Esophagus muscularis mucosa (tissue), 4 donors: ENCODE measurements at regions of chr2 and their contacts with region 1.

Region 1: GRCh38 chr2:134118279-134119116 is 135.4 kb upstream of the MGAT5 start:
- DNase-seq: peak; percentile 97
- H3K4me3 ChIP-seq: no peak overlapping the region
- H3K27ac ChIP-seq: peak overlapping the region; percentile 88 to 95 (median 93)
- H3K4me1 ChIP-seq: peaks cover 32 to 44% (median 37%) of the 10 kb centered on the region in 4 donors
- H3K27me3 ChIP-seq: no peaks in the 10 kb centered on the region
- CTCF ChIP-seq: peak; percentile 84 to 90 (median 87)
- EP300 ChIP-seq: no peak
- POLR2A ChIP-seq: no peak

Region 2: DNA sequence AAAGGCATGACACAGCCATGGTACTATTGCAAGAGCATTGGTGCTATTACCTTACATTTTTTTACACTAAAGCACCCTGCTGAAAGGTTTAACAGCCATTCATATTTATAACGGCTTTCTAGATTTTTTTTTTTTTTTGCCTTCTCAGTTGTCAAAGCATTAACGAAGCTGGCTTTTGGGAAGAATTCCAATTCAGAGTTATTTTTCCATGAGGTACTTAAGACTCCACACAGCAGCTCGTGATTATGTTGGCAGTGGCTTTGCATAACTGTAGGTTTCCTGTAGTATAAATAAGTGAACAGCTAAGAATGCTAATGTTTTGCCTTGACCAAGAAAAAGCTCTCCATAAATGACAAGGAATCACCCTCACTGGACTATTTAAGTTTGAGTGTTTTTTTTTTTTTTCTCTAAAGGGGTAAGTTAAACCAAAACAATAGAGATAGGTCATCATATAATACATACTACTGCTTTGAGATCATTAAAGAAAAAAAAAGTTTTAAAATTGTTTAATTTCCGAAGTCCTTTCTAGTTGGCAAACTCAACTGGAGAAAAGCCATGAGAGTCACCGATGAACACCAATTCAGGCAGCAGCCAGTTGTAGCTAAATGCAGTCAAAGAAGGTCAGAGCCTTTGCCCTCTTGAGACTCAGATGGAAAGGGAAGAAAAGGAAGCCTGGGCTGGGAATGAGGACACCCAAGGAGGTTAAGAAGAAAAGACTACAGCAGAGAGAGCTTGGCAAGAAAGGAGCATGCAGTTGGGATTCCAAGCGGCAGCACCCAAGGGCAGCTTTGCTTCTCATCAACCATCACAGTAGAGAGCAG is 362.8 kb before region 1 on chr2:
- intact Hi-C with region 1: no loop called
- DNase-seq: no peak
- H3K4me3 ChIP-seq: no peak overlapping the region
- H3K27ac ChIP-seq: peak overlapping the region; percentile 77 to 81 (median 80)
- H3K4me1 ChIP-seq: peaks cover 7 to 31% (median 22%) of the 10 kb centered on the region in 4 donors
- H3K27me3 ChIP-seq: no peaks in the 10 kb centered on the region
- CTCF ChIP-seq: no peak
- EP300 ChIP-seq: peak; percentile 33
- POLR2A ChIP-seq: no peak

Region 3: DNA sequence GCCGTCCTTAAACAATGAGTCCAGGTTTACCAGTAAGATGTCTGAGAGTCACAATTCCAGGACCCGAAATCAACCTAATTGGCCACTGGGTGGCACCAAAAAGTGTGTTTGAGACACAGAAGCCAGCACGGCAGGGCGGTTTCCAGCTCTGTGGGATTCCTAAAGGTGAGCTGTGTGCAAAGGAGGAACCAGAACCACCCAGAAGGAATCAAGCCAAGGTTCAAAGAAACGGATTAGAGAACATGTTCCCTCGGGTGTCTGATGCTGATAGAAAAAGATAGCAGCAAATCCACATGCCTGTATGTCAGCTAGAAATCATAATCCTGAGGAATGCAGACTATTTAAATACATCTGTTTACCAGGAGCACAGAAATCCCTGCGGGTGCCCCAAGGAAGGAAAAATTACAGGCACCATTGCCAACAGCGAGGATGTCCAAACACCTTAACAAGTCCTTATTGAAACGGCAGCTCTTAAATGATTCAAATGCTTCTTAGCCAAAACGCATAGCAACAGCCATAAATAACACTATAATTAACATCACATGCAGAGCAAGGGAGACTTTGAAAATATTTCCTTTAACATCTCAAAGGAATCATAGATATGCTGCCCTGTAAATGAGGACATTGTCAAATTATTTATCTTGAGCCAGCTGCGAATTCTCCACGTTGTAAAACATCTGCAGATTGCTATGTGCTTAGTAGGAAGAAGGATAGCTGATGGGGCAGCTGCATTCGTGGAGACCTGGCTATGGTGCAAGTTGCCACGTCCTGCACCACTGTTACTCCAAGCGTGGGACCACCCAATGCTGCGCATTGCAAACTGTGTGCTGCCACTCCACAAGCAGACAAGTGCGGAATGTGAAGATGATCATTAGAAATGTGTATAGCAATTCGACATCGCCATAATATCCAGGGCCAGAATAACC is 231.5 kb before region 1 on chr2:
- intact Hi-C with region 1: loop called (anchors 2 kb)
- DNase-seq: peak; percentile 91
- H3K4me3 ChIP-seq: no peak overlapping the region
- H3K27ac ChIP-seq: peak overlapping the region in 1 of 4 donors; percentile 52
- H3K4me1 ChIP-seq: peaks cover 0 to 17% (median 15%) of the 10 kb centered on the region in 4 donors
- H3K27me3 ChIP-seq: no peaks in the 10 kb centered on the region
- CTCF ChIP-seq: peak; percentile 55 to 66 (median 57)
- EP300 ChIP-seq: no peak
- POLR2A ChIP-seq: no peak

Region 4: DNA sequence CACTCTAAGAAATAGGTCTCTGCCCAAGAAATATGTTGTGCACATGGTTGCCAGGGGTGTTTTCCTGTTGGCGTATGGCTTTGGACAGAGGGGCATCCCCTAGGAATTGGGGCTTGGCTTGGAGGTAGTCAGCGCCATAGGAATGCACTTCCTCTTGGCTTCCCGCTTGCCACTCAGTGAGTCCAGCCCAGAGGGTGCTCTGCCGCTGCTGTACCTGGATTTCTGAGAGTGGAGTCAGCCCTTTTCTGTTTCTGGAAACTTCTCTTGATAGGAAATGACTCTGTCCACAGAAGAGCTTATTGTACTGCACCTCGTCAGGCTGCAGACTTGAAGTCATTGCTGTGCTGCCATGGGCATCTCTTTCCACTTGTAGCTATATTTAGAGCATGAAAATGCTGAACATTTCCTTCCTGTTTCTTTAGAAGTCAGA is 18.7 kb after region 1 on chr2:
- intact Hi-C with region 1: no loop called
- DNase-seq: no peak
- H3K4me3 ChIP-seq: peak overlapping the region; percentile 9 to 24 (median 17)
- H3K27ac ChIP-seq: peak overlapping the region; percentile 52 to 72 (median 62)
- H3K4me1 ChIP-seq: peaks cover 25 to 80% (median 57%) of the 10 kb centered on the region in 4 donors
- H3K27me3 ChIP-seq: no peaks in the 10 kb centered on the region
- CTCF ChIP-seq: no peak
- EP300 ChIP-seq: peak; percentile 68
- POLR2A ChIP-seq: no peak

Region 5: DNA sequence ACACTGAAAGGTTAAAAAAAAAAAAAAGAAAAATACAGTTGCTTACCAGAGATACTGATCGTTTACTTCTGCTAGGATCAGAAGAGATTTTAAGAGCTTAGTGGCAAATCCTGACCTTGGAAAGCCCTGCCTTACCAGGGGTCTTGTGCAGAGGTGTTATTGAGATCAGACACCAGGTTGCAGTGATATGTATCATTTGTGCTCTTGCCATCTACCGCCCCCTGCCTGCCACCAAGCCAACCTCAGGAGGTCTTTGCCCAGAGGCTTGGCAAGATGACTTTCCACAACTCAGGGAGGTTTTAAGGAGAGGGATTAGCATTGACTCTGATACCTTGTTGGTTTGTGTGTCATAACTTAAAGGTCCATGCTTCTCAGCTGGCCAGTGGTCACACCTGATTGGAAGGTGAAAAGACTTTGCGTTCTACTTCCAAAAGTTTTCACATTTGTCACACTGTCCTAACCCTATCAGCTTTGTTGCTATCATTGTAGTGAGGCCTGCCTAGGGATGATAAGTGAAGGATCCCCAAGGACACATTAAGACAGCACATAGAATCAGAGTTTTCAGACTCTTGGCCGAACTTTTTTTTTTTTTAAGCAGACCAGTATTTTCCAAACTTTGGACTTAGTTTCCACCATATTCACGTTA is 89.2 kb after region 1 on chr2:
- intact Hi-C with region 1: loop called (anchors 5 kb)
- DNase-seq: no peak
- H3K4me3 ChIP-seq: no peak overlapping the region
- H3K27ac ChIP-seq: no peak overlapping the region
- H3K4me1 ChIP-seq: peaks cover 31 to 45% (median 36%) of the 10 kb centered on the region in 4 donors
- H3K27me3 ChIP-seq: no peaks in the 10 kb centered on the region
- CTCF ChIP-seq: peak; percentile 48 to 54 (median 53)
- EP300 ChIP-seq: no peak
- POLR2A ChIP-seq: no peak

Region 6: DNA sequence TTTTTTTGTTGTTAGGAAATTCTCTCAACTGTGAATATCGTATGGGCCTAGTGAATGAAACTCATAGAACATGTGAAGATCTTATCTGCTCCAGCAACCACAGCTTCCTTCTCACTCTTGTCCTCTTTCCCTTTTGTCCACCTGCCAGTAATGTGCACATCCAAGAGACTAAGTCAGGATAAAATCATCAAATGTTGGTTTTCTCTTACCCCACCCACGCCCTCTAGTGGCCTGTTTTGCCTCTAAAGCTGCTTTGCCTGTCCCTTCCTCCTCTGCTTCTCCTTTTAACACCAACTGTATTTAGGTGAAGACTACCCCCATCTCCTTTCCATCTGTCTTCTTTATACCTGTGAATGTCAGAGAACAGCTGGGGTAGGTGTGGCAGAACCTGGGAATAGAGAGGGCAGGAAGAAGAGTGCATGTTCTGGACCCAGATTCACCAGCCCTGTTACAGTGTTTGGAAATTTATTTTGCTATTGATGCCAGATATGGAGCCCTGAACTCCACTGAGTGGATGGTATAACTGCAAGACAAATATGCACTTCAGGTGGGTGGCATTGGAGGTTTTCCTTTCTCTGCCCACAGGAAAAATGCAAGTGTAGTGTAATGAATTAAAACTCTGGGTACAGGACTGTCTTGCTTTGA is 127.0 kb after region 1 on chr2:
- intact Hi-C with region 1: loop called (anchors 2 kb)
- DNase-seq: peak; percentile 93
- H3K4me3 ChIP-seq: no peak overlapping the region
- H3K27ac ChIP-seq: no peak overlapping the region
- H3K4me1 ChIP-seq: peaks cover 19 to 37% (median 21%) of the 10 kb centered on the region in 4 donors
- H3K27me3 ChIP-seq: no peaks in the 10 kb centered on the region
- CTCF ChIP-seq: peak; percentile 63 to 77 (median 66)
- EP300 ChIP-seq: no peak
- POLR2A ChIP-seq: no peak

Region 7: GRCh38 chr2:134375935-134376334 is 257.4 kb after region 1 on chr2:
- intact Hi-C with region 1: loop called (anchors 10 kb)
- DNase-seq: no peak
- H3K4me3 ChIP-seq: no peak overlapping the region
- H3K27ac ChIP-seq: peak overlapping the region; percentile 73 to 82 (median 82)
- H3K4me1 ChIP-seq: peaks cover 56 to 62% (median 59%) of the 10 kb centered on the region in 4 donors
- H3K27me3 ChIP-seq: no peaks in the 10 kb centered on the region
- CTCF ChIP-seq: peak; percentile 36 to 60 (median 49)
- EP300 ChIP-seq: no peak
- POLR2A ChIP-seq: no peak

Region 8: GRCh38 chr2:134411828-134412638 is 293.5 kb after region 1 on chr2:
- intact Hi-C with region 1: loop called (anchors 2 kb)
- DNase-seq: peak; percentile 93
- H3K4me3 ChIP-seq: no peak overlapping the region
- H3K27ac ChIP-seq: no peak overlapping the region
- H3K4me1 ChIP-seq: peaks cover 19 to 42% (median 31%) of the 10 kb centered on the region in 4 donors
- H3K27me3 ChIP-seq: no peaks in the 10 kb centered on the region
- CTCF ChIP-seq: peak; percentile 60 to 73 (median 61)
- EP300 ChIP-seq: no peak
- POLR2A ChIP-seq: no peak

Region 9: DNA sequence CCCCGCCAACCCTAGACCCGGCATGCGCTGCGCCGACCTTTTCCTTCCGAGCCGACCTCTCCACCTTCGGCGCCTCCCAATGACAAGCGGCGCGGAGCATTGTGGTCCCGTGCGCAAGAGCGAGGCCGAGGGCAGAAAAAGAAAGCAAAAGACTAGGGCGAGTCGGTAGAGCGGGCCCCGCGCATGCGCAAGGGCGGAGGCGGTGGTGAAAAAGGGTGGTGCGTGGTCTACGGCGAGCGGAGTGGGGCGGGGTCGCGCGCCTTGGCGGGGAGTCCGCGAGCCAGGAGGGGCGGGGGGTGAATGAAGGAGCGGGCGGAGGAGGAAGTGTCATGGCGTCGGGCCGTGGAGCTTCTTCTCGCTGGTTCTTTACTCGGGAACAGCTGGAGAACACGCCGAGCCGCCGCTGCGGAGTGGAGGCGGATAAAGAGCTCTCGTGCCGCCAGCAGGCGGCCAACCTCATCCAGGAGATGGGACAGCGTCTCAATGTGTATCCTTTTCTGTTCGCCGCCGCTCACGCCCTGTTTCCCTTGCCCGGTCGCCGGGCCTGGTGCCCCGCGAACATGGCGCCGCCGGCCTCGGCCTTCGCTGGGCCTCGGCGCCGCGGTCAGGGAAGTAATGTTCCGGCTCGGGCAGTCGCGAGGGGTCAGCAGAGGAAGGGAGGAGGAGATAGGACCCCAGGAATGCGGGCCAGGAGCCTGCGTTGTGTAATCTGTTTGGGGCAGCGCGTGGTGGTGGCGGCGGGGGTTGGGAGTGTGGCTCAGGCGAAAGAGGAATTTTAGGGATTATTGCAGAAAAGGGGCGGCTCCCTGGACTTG is 800.2 kb after region 1 on chr2 and contains the start of gene CCNT2:
- intact Hi-C with region 1: loop called (anchors 10 kb)
- DNase-seq: peak; percentile 100
- H3K4me3 ChIP-seq: peak within 1 kb of the TSS; percentile 76 to 94 (median 92)
- H3K27ac ChIP-seq: peak within 1 kb of the TSS; percentile 96 to 98 (median 96)
- H3K4me1 ChIP-seq: peaks cover 41 to 52% (median 48%) of the 10 kb centered on the region in 4 donors
- H3K27me3 ChIP-seq: no peaks in the 10 kb centered on the region
- CTCF ChIP-seq: no peak
- EP300 ChIP-seq: no peak
- POLR2A ChIP-seq: no peak
- total RNA-seq, gene CCNT2: 16.1 to 29.1 (median 20.5) TPM